Activated T-helper 1 cell treated with anti-CD3 and anti-CD28 coated beads, Interleukin-12 subunit alpha, Interleukin-12 subunit beta, Interleukin-2, Interleukin-4 antibody, amounts not matched to agents 30 ng/mL and 10 ng/mL and 1 ng/mL, durations not matched to agents 14 hours and 24 hours and 36 hours (primary cell): ENCODE measurements at regions of chr9 and their contacts with region 1.

Region 1: GRCh38 chr9:127698985-127699670 is 7.7 kb upstream of the CFAP157 start:
- DNase-seq: peak; percentile 82
- H3K4me3 Mint-ChIP-seq: peak overlapping the region; percentile 49
- H3K27ac Mint-ChIP-seq: peak overlapping the region; percentile 22
- H3K4me1 Mint-ChIP-seq: peaks cover 15% of the 10 kb centered on the region
- H3K27me3 Mint-ChIP-seq: peaks cover 2% of the 10 kb centered on the region

Region 2: DNA sequence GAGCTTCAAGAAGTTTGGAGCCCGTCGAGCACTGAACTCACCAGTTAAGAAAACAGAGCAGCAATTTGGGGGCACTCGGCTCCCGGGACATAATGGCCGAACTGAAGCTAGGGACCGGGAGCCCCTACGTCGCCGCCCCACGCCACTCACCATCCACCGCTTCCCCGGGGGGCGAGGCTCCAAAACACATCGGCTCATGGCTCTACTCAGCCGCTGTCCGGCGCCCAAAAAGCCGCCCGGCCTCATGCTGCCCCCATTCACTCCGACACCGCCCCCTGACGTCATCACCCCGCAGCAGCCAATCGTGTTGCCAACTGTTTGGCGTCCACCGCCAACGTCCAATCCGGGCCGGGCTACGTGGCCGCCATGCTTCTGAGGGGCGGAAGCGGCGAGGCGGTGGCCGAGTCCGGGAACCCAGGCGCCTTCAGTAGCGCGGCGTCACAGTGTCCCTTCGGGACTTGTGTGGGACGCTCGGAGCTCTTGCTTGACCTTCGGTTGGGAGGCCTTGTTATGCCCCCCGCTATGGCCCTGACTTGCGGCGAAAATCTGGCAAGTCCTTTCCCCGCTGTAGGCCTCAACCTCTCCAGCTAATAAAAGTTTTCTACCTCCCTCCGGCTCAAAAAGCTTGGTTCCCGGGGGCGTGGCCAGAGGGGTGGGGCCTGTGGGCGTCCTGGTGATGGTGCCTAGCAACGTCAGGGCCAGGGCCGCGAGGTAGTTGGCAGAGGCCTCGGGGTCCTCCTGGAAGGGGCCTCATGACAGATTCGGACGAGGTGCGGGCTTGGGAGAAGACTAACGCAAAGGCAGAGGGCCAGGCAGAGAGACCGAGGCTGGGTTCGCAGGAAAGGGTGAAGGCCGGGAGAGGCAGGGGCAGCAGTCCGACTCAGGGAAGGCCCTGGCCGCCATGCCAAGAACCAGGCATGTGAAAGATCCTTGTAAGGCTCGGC is 16.5 kb after region 1 on chr9 and contains the starts of genes PTRH1 and TTC16:
- intact Hi-C with region 1: loop called (anchors 1 kb)
- DNase-seq: peak; percentile 97
- H3K4me3 Mint-ChIP-seq: peak within 1 kb of the TSS; percentile 98
- H3K27ac Mint-ChIP-seq: peak within 1 kb of the TSS; percentile 98
- H3K4me1 Mint-ChIP-seq: peaks cover 28% of the 10 kb centered on the region
- H3K27me3 Mint-ChIP-seq: peaks cover 2% of the 10 kb centered on the region
- total RNA-seq, gene PTRH1: 22.9 and 23.5 TPM in 2 replicates
- total RNA-seq, gene TTC16: 0.10 TPM in 1 of 2 replicates, not detected in the other

Region 3: GRCh38 chr9:128055344-128056040 is 356.4 kb after region 1 on chr9:
- intact Hi-C with region 1: no loop called
- DNase-seq: no peak
- H3K4me3 Mint-ChIP-seq: no peak overlapping the region
- H3K27ac Mint-ChIP-seq: no peak overlapping the region
- H3K4me1 Mint-ChIP-seq: no peaks in the 10 kb centered on the region
- H3K27me3 Mint-ChIP-seq: peaks cover 5% of the 10 kb centered on the region